ENCODE measurements at regions of chr10 and their contacts with region 1.

Region 1: DNA sequence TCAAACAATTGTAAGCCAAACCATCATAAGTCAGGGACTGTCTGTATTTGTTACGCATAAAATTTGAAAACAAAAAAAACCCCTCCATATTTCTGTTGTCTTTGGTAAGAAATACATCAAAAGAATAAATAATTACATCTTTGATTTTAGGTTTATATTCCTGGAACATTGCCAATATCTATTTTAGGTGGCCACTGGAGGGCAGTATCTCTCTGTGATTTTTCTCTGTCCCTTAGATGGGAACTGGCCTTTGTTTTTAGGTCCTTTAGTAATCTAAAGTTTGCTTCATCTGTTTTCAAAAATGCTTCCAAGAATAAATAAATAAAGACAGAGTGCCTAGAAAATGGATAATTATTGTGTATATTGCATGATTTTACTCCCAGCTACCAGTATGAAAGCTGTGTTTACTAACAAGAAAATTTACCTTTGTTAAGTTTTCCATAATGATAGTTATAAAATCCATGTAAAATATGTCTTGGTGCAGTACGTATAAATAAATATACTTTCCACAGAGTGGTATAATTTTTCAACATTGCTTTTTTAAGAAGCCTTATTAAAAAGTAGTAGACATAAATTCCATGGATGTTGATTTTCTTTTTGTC is 64.2 kb downstream of the PHYHIPL start:
- DNase-seq: no peak
- ATAC-seq: peak in 2 of 4 donors; percentile 56 to 68
- H3K4me3 ChIP-seq: no peak overlapping the region
- H3K27ac ChIP-seq: no peak overlapping the region
- H3K4me1 ChIP-seq: no peaks in the 10 kb centered on the region
- H3K27me3 ChIP-seq: no peaks in the 10 kb centered on the region
- CTCF ChIP-seq: peak; percentile 83

Region 2: DNA sequence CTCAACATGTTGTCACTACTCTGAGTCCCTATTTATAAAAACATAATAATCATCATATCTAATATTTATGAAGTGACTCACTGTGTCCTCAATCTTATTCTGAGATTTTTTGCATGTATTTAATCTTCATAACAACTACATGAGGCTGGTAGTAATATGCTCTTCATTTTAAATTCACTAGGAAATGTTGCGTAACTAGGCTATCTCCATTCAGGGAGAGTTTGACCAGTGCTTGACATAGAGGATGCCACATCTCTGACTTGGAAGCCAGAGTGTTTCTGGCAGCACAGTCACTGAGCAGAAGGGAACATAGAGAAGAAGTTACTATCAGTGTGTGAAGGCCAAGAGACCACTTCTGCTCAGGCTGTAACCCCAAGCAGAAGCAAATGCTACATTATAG is 32.8 kb after region 1 on chr10:
- intact Hi-C with region 1: no loop called
- DNase-seq: no peak
- ATAC-seq: peak; percentile 43 to 73 (median 66)
- H3K4me3 ChIP-seq: no peak overlapping the region
- H3K27ac ChIP-seq: no peak overlapping the region
- H3K4me1 ChIP-seq: no peaks in the 10 kb centered on the region
- H3K27me3 ChIP-seq: no peaks in the 10 kb centered on the region
- CTCF ChIP-seq: no peak

Region 3: DNA sequence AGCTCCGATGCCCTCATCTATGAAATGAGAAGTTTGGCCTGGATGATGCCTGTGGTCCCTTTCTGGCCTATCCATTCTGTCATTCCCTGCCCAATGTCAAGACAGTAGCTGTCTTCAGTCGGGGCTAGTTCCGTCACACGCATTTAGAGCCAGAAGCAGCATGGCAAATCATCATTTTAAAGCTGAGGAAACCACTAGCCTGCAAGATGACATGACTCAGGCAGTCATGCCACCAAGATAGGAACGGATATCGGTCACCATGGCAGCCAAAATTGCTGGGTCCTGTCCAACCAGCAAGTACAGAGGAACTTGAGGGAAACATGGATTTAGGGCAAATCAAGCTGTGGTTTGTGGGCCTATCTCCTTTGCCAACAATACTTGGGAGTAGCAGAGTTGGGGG is 577.1 kb after region 1 on chr10:
- intact Hi-C with region 1: loop called (anchors 10 kb)
- DNase-seq: peak; percentile 42 to 58
- ATAC-seq: peak in 1 of 4 donors; percentile 65
- H3K4me3 ChIP-seq: no peak overlapping the region
- H3K27ac ChIP-seq: no peak overlapping the region
- H3K4me1 ChIP-seq: peaks cover 10% of the 10 kb centered on the region
- H3K27me3 ChIP-seq: no peaks in the 10 kb centered on the region
- CTCF ChIP-seq: no peak